Activated T-helper 2 cell treated with anti-CD3 and anti-CD28 coated beads, Interferon-gamma antibody, Interleukin-2, Interleukin-4, amounts not matched to agents 10 μg/mL and 5 μg/mL and 100 μg/mL, durations not matched to agents 14 hours and 24 hours and 36 hours (primary cell): ENCODE measurements at regions of chr2 and their contacts with region 1.

Region 1: DNA sequence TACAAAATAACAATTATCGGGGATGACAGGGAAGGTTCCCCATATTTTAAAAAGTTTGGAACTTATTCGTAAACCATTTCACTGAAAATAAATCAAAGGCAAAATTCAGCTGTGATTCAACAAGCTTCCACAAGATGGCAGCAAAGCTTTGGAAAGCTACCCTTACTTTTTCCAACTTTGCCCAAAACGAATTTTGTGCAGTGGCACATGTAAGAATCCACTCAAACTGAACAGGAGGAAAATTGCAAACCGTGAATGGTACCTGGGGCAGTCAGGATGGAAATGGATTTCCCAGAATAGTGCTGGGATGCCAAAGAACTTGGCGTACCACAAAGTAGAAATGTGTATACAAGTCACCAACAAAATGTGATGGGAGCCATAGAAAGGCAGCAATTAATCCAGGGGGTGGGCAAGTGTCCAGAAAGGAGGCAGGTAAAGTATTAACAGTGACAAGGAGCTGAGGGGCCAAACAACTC is 10.7 kb downstream of the RPL31 start:
- DNase-seq: no peak
- H3K4me3 Mint-ChIP-seq: no peak overlapping the region
- H3K27ac Mint-ChIP-seq: peak overlapping the region; percentile 77
- H3K4me1 Mint-ChIP-seq: peaks cover 22% of the 10 kb centered on the region
- H3K27me3 Mint-ChIP-seq: no peaks in the 10 kb centered on the region

Region 2: DNA sequence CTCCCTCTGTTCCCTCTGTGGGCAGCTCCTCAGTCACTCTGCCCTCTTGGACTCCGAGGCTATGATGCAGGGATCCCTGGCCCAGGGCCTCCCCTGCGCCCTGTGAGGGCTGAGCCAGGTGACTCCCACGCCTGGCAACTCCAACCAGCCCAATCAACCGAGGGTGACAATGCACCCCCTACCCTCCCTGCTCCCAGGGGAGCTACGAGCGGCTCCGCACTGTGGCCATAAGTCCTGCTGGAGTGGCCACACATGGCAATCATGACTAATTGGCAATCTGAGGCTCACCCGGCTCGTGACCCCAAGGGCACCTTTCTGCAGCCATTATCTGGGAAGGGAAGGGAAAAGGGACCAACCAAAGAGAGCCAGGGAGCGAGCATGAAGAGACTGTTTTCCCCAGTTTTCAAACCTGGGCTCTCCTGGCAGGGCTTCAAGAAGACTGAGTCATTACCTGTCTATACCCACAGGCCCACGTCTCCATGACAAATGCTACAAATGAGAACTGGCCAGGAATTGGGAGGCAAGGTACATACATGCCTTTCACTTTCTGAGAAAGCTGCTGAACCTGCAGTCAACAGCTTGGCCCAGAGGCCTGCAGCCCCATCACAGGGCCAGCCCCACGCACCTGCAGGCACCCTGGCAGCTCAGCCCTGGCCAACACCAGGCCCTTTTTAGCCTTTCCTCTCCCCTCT is 34.5 kb after region 1 on chr2:
- intact Hi-C with region 1: no loop called
- DNase-seq: no peak
- H3K4me3 Mint-ChIP-seq: no peak overlapping the region
- H3K27ac Mint-ChIP-seq: no peak overlapping the region
- H3K4me1 Mint-ChIP-seq: no peaks in the 10 kb centered on the region
- H3K27me3 Mint-ChIP-seq: peaks cover 3% of the 10 kb centered on the region

Region 3: DNA sequence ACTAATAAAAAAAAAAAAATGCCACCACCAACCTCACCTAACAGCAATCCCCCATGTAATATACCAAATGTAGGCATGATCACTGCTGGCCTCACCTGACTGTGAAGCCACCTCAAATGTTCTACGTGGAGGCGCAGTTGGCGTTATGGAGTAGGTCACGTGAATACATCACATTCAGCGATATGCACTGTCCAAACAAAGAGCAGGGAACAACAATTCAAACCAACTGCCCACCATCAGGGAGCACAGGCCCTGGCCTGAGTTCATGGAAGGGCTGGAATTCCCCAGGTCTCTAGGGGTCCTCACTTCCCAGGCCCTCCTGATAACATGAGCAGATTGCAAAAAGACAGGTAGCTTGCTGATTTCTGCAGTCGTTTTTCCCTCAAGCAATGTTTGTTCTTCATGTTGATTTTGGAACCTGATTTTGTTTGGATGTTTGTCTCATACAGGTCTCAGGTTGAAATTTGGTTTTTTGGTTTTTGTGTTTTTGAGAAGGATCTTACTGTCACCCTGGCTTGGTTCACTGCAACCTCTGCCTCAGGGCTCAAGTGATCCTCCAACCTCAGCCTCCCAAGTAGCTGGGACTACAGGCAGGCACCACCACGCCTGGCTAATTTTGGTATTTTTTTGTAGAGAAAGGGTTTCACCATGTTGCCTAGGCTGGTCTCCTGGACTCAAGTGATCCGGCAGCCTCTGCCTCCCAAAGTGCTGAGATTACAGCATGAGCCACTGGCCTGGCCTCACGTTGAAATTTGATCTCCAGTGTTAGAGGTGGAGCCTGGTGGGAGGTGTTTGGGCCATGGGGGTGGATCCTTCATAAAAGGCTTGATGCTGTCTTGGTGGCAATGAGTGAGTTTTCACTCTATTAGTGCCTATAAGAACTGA is 122.9 kb after region 1 on chr2:
- intact Hi-C with region 1: no loop called
- DNase-seq: no peak
- H3K4me3 Mint-ChIP-seq: no peak overlapping the region
- H3K27ac Mint-ChIP-seq: no peak overlapping the region
- H3K4me1 Mint-ChIP-seq: no peaks in the 10 kb centered on the region
- H3K27me3 Mint-ChIP-seq: no peaks in the 10 kb centered on the region

Region 4: GRCh38 chr2:101387151-101387807 is 374.5 kb after region 1 on chr2 and contains the start of gene CREG2:
- intact Hi-C with region 1: loop called (anchors 5 kb)
- DNase-seq: peak; percentile 56
- H3K4me3 Mint-ChIP-seq: peak within 1 kb of the TSS; percentile 66
- H3K27ac Mint-ChIP-seq: no peak within 1 kb of the TSS
- H3K4me1 Mint-ChIP-seq: no peaks in the 10 kb centered on the region
- H3K27me3 Mint-ChIP-seq: peaks cover 64% of the 10 kb centered on the region
- total RNA-seq, gene CREG2: not detected in 2 replicates

Region 5: DNA sequence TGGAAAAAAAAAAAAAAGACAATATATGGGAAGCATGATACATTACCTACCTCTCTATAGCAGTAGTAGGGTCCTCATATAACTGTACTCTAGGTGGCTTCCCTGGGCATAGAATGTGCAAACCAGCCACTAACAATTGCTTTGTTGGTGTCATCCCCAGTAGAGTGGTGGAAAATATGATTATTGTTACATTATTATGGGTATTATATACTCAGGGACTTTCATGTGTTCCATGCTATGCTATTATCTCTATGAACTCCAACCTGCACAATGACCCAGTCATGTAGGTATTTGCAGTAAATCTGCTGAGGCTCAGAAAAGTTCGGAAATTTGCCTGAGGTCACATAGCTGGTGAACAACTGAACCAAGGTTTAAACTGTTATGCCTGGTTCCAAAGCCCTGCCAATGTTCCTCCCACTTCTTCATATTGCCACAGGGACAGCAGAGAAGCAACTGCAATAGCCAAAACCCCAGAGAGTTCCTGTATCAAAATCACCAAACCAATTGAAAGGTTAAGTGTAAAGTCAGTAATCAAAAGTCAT is 632.2 kb after region 1 on chr2:
- intact Hi-C with region 1: no loop called
- DNase-seq: no peak
- H3K4me3 Mint-ChIP-seq: no peak overlapping the region
- H3K27ac Mint-ChIP-seq: no peak overlapping the region
- H3K4me1 Mint-ChIP-seq: no peaks in the 10 kb centered on the region
- H3K27me3 Mint-ChIP-seq: no peaks in the 10 kb centered on the region